ENCODE measurements at regions of chr10 and their contacts with region 1.

Region 1: GRCh38 chr10:15163253-15163828 is 5.2 kb downstream of the NMT2 start:
- DNase-seq: no peak
- ATAC-seq: no peak
- H3K4me3 ChIP-seq: no peak overlapping the region
- H3K27ac ChIP-seq: peak overlapping the region in 1 of 10 donors; percentile 32
- H3K4me1 ChIP-seq: peaks cover 0 to 29% (median 21%) of the 10 kb centered on the region in 9 donors
- H3K27me3 ChIP-seq: peaks cover 0 to 15% (median 0%) of the 10 kb centered on the region in 7 donors
- CTCF ChIP-seq: no peak

Region 2: DNA sequence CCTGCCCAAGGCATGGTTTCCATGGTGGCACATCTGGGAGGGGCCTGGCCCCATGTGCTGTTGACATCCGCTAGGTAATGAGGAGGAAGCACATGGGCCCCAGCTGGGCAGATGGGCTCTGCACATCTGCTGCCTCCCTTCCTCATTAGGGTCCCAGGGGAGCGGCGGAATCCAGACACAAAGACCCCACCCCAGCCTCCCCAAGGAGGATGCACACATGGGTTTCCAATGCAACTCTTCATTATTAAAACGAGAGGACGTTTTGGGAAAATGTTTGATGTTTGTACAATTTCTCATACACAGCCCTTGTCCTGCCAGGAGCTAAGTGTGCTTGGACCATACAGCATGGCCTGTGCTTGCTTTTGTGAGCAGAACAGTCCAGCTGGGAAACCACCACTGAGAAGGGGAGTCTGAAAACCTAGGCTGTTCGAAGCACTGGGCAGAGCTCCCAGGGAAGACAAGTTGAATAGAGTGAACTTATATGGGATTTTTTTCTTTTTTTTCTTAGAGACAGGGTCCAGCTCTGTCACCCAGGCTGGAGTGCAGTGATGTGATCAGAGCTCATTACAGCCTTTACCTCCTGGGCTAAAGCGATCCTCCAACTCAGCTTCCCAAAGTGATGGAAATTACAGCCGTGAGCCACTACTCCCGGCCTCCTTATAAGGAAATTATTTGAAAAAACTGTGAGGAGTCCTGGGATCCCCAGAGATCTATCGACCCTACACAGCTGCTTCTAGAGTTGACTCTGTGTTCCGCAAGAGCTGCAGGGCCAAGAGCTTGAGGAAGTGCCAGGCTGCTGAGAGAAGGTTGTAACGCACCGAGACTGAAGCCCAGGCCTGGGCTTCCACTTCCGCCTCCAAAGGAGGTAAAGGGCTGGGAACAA is 412.1 kb before region 1 on chr10:
- intact Hi-C with region 1: no loop called
- DNase-seq: peak; percentile 60
- ATAC-seq: peak; percentile 76 to 88 (median 84)
- H3K4me3 ChIP-seq: no peak overlapping the region
- H3K27ac ChIP-seq: peak overlapping the region; percentile 68 to 87 (median 80)
- H3K4me1 ChIP-seq: peaks cover 8 to 50% (median 39%) of the 10 kb centered on the region in 9 donors
- H3K27me3 ChIP-seq: no peaks in the 10 kb centered on the region
- CTCF ChIP-seq: no peak

Region 3: GRCh38 chr10:15118615-15119014 is 44.7 kb before region 1 on chr10:
- intact Hi-C with region 1: loop called in 1 of 10 experiments (anchors 5 kb)
- DNase-seq: no peak
- ATAC-seq: no peak
- H3K4me3 ChIP-seq: no peak overlapping the region
- H3K27ac ChIP-seq: no peak overlapping the region
- H3K4me1 ChIP-seq: no peaks in the 10 kb centered on the region
- H3K27me3 ChIP-seq: no peaks in the 10 kb centered on the region
- CTCF ChIP-seq: no peak

Measured in heart right ventricle (tissue), 16 donors.